Activated CD4-positive, alpha-beta T cell treated with anti-CD3 and anti-CD28 coated beads, Interleukin-2, amount 10 ng/mL, durations not matched to agents 24 days and 14 days (primary cell): ENCODE measurements at regions of chr4 and their contacts with region 1.

Region 1: DNA sequence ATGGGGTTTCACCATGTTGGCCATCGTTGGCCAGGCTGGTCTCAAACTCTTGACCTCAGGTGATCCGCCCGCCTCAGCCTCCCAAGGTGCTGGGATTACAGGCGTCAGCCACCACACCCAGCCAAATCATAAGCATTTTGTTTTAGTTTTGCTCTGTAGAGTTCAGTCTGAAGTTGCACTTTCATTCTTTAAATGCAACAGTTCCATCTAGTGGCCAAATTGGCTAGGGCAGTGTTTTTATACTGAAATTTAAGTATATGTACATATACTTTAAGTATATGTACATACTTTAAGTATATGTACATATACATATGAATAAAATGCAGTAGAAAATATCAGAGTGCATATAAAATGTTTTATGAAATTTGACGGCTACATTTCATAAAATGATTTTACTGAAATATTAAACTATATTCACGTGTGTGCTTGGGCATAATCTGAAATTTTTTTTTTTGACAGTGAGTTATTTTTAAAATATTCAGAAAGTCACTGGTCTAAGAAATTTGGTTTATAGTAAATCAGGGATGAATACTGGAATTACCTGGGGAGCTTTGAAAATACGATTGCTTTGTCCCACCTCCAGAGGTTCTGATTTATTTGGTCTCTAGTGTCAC is 145.5 kb downstream of the NWD2 start:
- DNase-seq: peak; percentile 83
- H3K4me3 Mint-ChIP-seq: no peak overlapping the region
- H3K27ac Mint-ChIP-seq: no peak overlapping the region
- H3K4me1 Mint-ChIP-seq: peaks cover 11% of the 10 kb centered on the region
- H3K27me3 Mint-ChIP-seq: peaks cover 2% of the 10 kb centered on the region

Region 2: DNA sequence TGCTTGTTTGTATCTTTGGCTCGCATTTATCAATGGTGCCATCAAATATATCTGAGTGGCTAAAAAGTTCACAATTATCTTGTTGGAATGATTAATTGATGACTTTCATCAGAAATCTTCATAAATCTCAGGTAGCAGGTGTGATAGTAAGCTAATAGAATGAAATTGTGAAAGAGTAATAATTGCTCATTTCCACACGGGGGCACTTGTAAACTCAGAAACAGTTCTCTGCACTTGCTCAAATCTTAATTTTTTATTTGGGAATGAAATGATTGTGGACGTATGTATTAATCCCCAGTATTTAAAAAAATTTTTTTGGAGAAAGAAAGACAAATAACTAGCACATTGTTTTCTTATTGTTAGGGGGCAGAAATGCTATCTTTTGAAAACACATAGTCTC is 975.8 kb before region 1 on chr4:
- intact Hi-C with region 1: loop called (anchors 10 kb)
- DNase-seq: no peak
- H3K4me3 Mint-ChIP-seq: no peak overlapping the region
- H3K27ac Mint-ChIP-seq: no peak overlapping the region
- H3K4me1 Mint-ChIP-seq: no peaks in the 10 kb centered on the region
- H3K27me3 Mint-ChIP-seq: peaks cover 34% of the 10 kb centered on the region

Region 3: DNA sequence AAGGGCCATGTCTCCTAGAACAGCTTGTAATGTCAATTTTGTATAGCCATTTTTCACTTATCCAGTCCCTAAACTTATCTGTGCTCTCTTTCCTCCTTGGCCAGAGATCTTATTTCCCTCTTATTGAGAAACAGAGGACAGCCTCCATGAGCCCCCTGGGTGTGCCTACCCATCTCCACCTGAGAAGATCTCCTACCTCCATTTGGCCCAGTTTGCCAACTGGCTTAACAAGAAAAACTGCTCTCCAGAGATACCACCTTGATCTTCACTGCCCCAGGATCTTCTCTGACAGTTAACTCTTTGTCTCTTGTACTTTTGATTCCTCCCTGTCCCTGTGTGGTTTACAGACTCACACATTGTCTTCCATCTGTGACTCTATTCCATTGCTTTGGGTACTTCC is 11.0 kb after region 1 on chr4:
- intact Hi-C with region 1: no loop called
- DNase-seq: no peak
- H3K4me3 Mint-ChIP-seq: no peak overlapping the region
- H3K27ac Mint-ChIP-seq: no peak overlapping the region
- H3K4me1 Mint-ChIP-seq: peaks cover 3% of the 10 kb centered on the region
- H3K27me3 Mint-ChIP-seq: no peaks in the 10 kb centered on the region